ENCODE measurements at regions of chr4 and their contacts with region 1.

Region 1: DNA sequence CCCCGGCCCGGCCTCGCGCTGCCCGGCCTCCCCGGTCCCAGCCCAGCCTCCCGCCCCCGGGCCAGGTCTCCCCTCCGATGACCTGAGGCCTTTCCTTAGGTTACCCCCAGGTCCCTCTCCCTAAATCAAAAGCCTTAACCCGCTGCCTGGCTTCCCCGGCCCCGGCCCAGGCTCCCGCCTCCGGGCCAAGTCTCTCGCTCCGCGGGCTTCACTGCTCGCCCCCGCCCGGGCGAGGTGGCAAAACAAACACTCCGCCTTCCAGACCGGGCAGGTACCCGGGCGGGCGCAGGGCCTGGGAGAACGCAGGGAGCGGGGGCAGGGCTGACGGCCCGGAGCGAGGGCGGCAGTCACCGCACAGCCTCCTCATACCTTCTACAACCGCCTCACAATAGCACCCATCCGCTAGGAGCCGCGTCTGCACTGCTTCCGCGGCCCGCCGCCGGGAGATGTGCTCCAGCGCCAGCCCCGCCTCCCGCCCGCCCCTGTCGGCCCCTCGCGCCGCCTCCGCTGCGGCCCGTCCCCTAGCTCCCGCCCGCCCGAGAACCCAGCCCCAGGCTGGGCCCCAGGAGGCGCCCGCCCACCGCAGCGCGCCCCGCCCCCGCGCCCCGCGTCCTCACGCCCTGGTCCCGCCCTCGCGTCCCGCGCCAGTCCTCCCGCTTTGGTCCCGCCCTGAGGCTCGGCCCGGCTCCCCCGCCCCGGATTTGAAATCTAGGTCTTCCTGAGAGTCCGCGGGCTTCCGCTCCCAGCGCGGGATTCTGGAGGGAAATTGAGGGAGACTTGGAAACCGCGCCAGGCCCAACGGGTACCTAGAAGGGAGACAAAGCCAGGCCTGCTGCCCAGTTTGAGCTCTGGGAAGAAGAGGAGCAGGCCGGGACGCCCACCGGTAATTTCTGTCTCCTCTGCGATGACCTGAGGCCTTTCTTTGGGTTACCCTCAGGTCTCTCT is at the starts of genes CASP3 and PRIMPOL:
- DNase-seq: peak; percentile 97
- H3K4me3 Mint-ChIP-seq: peak within 1 kb of the TSS; percentile 93
- H3K27ac Mint-ChIP-seq: peak within 1 kb of the TSS; percentile 90
- H3K4me1 Mint-ChIP-seq: peaks cover 50% of the 10 kb centered on the region
- H3K27me3 Mint-ChIP-seq: no peaks in the 10 kb centered on the region
- total RNA-seq, gene CASP3: 27.5 to 27.9 TPM
- total RNA-seq, gene PRIMPOL: 17.9 to 18.1 TPM

Region 2: GRCh38 chr4:183659029-183659871 is 990.0 kb before region 1 on chr4 and contains the starts of genes RWDD4 and TRAPPC11:
- CTCF ChIA-PET with region 1: no interaction called
- intact Hi-C with region 1: loop called (anchors 1 kb)
- DNase-seq: peak; percentile 98
- H3K4me3 Mint-ChIP-seq: peak within 1 kb of the TSS; percentile 96
- H3K27ac Mint-ChIP-seq: peak within 1 kb of the TSS; percentile 68
- H3K4me1 Mint-ChIP-seq: peaks cover 32% of the 10 kb centered on the region
- H3K27me3 Mint-ChIP-seq: no peaks in the 10 kb centered on the region
- total RNA-seq, gene RWDD4: 17.8 to 20.8 TPM
- total RNA-seq, gene TRAPPC11: 25.0 to 32.6 TPM

Region 3: DNA sequence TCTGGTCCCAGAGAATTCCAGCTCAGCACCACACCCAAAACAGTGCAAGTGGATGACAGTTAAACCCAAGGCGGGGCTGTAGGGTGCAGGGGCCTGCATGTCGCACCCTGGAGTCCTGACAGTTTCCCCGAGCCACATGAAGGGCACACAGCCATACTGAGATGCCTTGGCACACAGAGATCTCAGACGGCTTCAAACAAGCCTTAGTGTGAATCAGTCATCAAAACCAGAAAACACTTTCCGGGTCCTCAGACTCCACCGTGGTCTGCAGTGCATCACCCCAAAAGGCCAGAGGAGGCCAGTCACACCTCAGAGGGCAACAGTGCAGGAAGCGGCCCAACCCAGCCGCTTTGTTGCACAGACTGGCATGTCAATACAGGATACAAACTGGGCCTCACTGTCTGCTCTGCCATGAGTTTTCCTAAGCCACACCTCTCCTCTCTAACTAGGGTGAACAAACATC is 367.0 kb before region 1 on chr4:
- CTCF ChIA-PET with region 1: interaction called, 3 read pairs
- intact Hi-C with region 1: loop called (anchors 1 kb)
- DNase-seq: peak; percentile 82
- H3K4me3 Mint-ChIP-seq: no peak overlapping the region
- H3K27ac Mint-ChIP-seq: peak overlapping the region; percentile 85
- H3K4me1 Mint-ChIP-seq: peaks cover 64% of the 10 kb centered on the region
- H3K27me3 Mint-ChIP-seq: peaks cover 4% of the 10 kb centered on the region

Region 4: GRCh38 chr4:184417802-184418511 is 231.3 kb before region 1 on chr4:
- CTCF ChIA-PET with region 1: no interaction called
- intact Hi-C with region 1: loop called (anchors 2 kb)
- DNase-seq: peak; percentile 27
- H3K4me3 Mint-ChIP-seq: no peak overlapping the region
- H3K27ac Mint-ChIP-seq: peak overlapping the region; percentile 73
- H3K4me1 Mint-ChIP-seq: peaks cover 84% of the 10 kb centered on the region
- H3K27me3 Mint-ChIP-seq: no peaks in the 10 kb centered on the region

Region 5: DNA sequence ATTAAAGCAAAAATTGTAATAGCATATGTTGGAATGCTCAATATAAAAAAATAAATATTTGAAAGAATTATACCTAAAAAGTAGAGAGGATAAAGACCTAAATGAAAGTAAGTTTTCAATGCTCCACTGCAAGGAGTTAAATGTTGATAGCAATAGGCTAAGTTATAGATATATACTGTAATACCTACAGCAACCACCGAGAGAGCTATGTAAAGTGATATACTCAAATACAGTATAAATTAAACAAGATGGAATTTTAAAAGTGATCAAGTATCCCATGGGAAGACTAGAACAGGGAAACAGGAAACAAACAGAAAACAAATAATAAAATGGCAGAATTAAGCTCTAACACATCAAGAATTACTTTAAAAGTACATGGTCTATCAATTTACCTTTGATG is 74.0 kb before region 1 on chr4:
- CTCF ChIA-PET with region 1: no interaction called
- intact Hi-C with region 1: loop called (anchors 2 kb)
- DNase-seq: no peak
- H3K4me3 Mint-ChIP-seq: no peak overlapping the region
- H3K27ac Mint-ChIP-seq: no peak overlapping the region
- H3K4me1 Mint-ChIP-seq: peaks cover 13% of the 10 kb centered on the region
- H3K27me3 Mint-ChIP-seq: no peaks in the 10 kb centered on the region

Region 6: GRCh38 chr4:184591070-184591677 is 58.1 kb before region 1 on chr4:
- CTCF ChIA-PET with region 1: no interaction called
- intact Hi-C with region 1: no loop called
- DNase-seq: no peak
- H3K4me3 Mint-ChIP-seq: no peak overlapping the region
- H3K27ac Mint-ChIP-seq: no peak overlapping the region
- H3K4me1 Mint-ChIP-seq: no peaks in the 10 kb centered on the region
- H3K27me3 Mint-ChIP-seq: no peaks in the 10 kb centered on the region

Region 7: DNA sequence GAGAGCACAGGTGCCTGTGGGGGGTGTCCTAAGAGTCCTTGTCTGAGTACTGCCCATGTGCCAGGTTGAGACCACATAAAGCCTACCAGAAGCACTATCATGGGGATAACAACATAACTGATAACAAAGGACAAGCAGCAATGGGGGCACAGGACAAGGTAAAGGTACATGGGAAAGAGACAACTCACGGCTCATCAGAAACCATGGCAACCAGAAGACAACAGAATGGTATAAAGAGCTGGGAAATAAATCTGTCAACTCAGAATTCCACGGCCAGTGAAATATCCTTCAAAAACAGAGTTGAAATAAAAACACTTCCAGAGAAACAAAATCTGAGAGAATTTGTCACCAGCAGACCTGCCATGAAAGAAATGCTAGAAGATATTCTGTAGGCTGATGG is 64.6 kb after region 1 on chr4:
- CTCF ChIA-PET with region 1: no interaction called
- intact Hi-C with region 1: no loop called
- DNase-seq: no peak
- H3K4me3 Mint-ChIP-seq: no peak overlapping the region
- H3K27ac Mint-ChIP-seq: no peak overlapping the region
- H3K4me1 Mint-ChIP-seq: no peaks in the 10 kb centered on the region
- H3K27me3 Mint-ChIP-seq: no peaks in the 10 kb centered on the region

Region 8: GRCh38 chr4:184733654-184734524 is 84.6 kb after region 1 on chr4 and contains the start of gene CENPU:
- CTCF ChIA-PET with region 1: no interaction called
- intact Hi-C with region 1: loop called (anchors 1 kb)
- DNase-seq: peak; percentile 97
- H3K4me3 Mint-ChIP-seq: peak within 1 kb of the TSS; percentile 97
- H3K27ac Mint-ChIP-seq: peak within 1 kb of the TSS; percentile 86
- H3K4me1 Mint-ChIP-seq: peaks cover 19% of the 10 kb centered on the region
- H3K27me3 Mint-ChIP-seq: no peaks in the 10 kb centered on the region
- total RNA-seq, gene CENPU: 78.7 to 91.5 TPM

Region 9: DNA sequence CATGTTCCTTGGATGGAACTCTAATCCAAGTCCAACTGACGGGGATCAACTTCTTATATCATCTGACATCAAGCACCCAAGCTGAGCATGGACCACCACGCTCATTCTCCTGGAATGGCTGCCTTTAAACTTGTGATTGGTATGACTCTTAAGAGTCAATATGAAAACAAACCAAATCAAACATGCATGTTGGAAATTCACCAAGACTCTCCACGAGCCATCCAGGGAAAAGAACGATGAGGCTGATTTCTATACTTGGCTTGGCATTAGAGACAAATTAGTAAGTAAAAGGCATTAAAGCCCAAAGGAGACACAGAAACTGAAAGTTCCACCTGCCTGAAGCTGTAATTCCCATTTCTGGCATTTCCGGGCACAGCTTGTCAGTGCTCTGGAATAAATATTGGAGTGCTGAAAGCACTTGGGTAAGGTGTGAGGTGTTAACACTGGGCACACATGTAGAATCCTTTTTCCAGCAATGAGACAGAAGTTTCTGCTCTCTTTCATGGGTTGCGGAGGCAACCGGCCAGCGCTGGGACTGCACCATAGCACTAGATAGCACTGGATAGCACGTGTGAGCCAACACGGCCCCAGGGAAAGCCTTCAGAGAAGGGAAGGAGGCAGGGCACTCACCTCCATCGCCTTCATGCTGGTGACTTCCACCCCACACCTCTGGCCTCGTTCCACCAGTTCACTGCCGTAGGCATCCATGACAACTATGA is 126.7 kb after region 1 on chr4:
- CTCF ChIA-PET with region 1: no interaction called
- intact Hi-C with region 1: no loop called
- DNase-seq: no peak
- H3K4me3 Mint-ChIP-seq: no peak overlapping the region
- H3K27ac Mint-ChIP-seq: no peak overlapping the region
- H3K4me1 Mint-ChIP-seq: no peaks in the 10 kb centered on the region
- H3K27me3 Mint-ChIP-seq: no peaks in the 10 kb centered on the region

Region 10: DNA sequence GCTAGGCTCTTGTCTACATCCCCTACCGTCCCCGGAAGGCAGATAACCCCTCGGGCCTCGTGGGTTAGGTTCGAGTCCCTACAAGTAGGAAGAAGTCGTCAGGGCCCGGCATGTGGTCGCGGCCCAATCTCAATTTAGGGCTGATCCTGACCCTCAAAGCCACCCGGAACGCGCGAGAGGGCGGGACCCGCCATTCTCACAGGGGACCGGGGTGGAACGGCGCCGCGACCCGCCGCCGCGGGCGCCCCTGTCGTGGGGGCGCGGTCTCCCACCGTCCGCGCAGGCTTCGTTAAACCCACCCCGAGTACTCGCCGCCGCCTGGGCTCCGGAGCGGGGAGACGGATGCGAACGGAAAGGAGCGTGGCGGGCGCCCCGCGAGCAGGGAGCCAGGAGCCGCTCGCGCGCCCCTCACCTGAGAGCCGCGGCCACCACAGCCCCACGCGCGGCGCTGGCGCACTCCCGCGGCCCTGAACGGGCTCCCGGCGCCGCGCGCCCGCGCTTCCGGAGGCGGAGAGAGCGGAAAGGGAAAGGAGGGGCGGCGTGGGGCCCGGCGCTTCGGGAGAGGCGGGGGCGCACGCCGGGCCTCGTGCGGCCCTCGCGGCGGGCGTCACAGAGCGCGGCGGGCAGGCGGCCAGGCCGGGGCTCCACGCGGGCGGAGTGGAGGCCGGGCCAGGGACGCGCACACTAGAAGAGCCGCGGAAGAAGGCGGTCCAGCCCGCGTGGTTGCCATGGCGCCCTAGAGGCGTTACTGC is 554.4 kb after region 1 on chr4 and contains the start of gene CFAP97:
- CTCF ChIA-PET with region 1: no interaction called
- intact Hi-C with region 1: loop called (anchors 5 kb)
- DNase-seq: peak; percentile 73
- H3K4me3 Mint-ChIP-seq: peak within 1 kb of the TSS; percentile 96
- H3K27ac Mint-ChIP-seq: peak within 1 kb of the TSS; percentile 96
- H3K4me1 Mint-ChIP-seq: peaks cover 32% of the 10 kb centered on the region
- H3K27me3 Mint-ChIP-seq: no peaks in the 10 kb centered on the region
- total RNA-seq, gene CFAP97: 38.4 to 43.6 TPM